HepG2 (cell line): ENCODE measurements at regions of chr9 and their contacts with region 1.

Region 1: GRCh38 chr9:68719842-68720241 is 14.8 kb downstream of the PIP5K1B start:
- DNase-seq: peak; percentile 47
- ATAC-seq: peak; percentile 59; the same call in 2 of the 3 replicates
- H3K4me3 ChIP-seq: peak overlapping the region in 2 of 3 experiments; percentile 10 to 19; a peak in 2 of 6 replicates
- H3K27ac ChIP-seq: peak overlapping the region; percentile 63
- H3K4me1 ChIP-seq: peaks cover 59% of the 10 kb centered on the region
- H3K27me3 ChIP-seq: no peaks in the 10 kb centered on the region
- CTCF ChIP-seq: no peak
- EP300 ChIP-seq: peak in 1 of 2 experiments; percentile 84; a peak in 2 of 4 replicates
- POLR2A ChIP-seq: no peak
- RAD21 ChIP-seq: no peak

Region 2: DNA sequence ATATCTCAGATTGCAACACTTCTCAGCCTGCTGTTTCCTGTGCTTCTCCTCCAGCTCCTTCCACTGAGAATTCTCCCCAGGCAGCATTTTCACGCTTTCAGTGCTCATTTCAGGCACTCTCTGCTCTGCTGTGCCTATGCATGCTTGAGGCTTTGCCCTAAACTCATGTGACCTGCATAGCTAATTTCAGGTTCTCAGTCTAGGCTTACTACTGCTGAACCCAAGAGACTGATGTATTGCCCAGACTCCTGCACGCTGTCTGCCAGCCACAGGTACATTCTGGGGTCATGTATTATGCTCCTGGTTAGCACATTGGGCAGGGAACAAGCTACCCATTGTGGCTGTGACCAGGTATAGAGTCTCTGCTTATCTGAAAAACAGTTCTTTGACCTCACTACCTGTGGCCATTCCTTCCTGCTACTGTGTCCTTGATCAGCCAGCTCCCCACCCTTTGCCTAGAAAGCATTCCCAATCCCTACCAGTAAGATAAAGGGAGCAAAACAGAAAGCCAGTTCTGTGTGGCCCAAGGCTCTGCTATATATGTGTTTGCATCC is 19.9 kb after region 1 on chr9:
- CTCF ChIA-PET with region 1: no interaction called
- POLR2A ChIA-PET with region 1: interaction called, 15 read pairs
- in situ Hi-C with region 1: no loop called
- intact Hi-C with region 1: no loop called
- DNase-seq: peak; percentile 94
- ATAC-seq: peak; percentile 97
- H3K4me3 ChIP-seq: peak overlapping the region in 2 of 3 experiments; percentile 39 to 48; a peak in 4 of 6 replicates
- H3K27ac ChIP-seq: peak overlapping the region; percentile 81
- H3K4me1 ChIP-seq: peaks cover 75% of the 10 kb centered on the region
- H3K27me3 ChIP-seq: no peaks in the 10 kb centered on the region
- CTCF ChIP-seq: no peak
- EP300 ChIP-seq: peak in 1 of 2 experiments; percentile 84; a peak in 2 of 4 replicates
- POLR2A ChIP-seq: no peak
- RAD21 ChIP-seq: no peak